RWPE1 (cell line): ENCODE measurements at regions of chr9 and their contacts with region 1.

Region 1: GRCh38 chr9:93302551-93303257 is 118.8 kb downstream of the WNK2 start:
- DNase-seq: peak; percentile 70
- H3K27ac ChIP-seq: no peak overlapping the region
- CTCF ChIP-seq: peak; percentile 76

Region 2: GRCh38 chr9:93154315-93154903 is 148.3 kb before region 1 on chr9:
- CTCF ChIA-PET with region 1: interaction called, 28 read pairs
- POLR2A ChIA-PET with region 1: no interaction called
- DNase-seq: peak; percentile 57
- H3K27ac ChIP-seq: no peak overlapping the region
- CTCF ChIP-seq: peak; percentile 71

Region 3: DNA sequence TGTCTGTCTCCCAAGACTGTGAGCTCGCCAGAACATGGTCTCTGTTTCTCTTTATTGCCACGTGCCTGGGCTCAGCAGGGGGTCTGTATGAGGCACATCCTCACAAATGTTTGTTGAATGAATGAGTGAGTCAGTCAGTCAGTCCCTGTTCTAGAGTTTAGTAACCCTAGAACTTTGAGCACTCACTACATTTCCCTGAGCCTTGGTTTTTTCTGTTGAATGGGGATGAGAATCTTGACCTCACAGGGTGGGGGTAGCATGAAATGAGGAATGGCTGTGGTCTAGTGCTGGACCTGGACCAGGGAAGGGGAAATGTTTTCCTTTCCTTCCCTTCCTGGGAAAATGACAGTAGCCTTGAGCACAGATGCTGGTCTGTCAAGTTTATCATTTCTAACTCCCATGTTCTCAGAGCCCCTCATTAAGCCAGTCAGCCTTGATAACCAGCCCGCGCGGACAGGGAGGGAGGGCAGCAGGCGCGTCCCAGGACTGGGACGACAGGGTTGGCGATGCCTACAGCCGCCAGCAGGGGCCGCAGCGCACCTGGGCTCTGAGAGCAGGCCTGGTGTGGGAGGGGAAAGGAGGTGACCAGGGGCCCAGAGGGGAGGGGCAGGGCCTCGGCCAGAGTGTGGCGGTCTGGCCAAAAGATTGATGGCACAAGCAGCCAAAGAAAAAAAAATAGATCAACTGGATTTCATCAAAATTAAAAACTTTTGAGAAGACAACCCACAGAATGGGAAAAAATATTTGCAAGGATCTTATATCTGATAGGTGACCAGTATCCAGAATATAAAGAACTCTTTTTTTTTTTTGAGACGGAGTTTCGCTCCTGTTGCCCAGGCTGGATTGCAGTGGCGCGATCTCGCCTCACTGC is 142.9 kb before region 1 on chr9:
- CTCF ChIA-PET with region 1: interaction called, 28 read pairs
- POLR2A ChIA-PET with region 1: no interaction called
- DNase-seq: peak; percentile 95
- H3K27ac ChIP-seq: no peak overlapping the region
- CTCF ChIP-seq: peak; percentile 100

Region 4: DNA sequence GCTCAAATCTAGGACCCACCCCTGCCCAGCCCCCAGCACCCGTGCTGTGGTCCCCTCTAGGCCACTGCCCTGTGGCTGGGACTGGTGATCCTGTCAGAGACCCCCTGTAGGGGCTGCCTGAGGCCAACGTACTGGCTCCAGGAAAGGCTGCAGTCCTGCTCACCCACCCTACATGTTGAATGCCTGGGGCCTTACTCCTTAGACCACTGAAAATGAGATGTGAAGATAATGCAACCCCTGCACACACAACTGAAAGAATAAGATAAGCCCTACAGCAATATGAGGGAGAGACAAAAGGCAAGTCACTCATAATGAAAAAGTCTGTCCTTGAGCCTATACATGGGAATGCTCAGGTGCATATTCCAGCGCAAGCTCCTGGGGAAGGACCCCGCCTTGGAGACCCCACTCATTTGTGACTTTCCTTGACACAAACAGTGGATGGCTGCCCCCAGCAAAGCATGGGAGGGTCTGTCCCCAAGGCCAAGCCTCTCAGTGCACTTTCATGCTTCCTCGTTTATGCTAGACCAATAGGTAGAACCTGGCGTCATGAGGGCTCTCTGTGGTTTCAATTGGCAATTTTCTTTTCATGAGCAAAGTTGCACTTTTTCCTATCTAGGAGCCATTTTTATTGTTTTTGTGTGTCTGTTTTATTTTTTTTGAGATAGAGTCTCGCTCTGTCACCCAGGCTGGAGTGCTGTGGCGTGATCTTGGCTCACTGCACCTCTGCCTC is 131.3 kb before region 1 on chr9:
- CTCF ChIA-PET with region 1: no interaction called
- POLR2A ChIA-PET with region 1: no interaction called
- DNase-seq: no peak
- H3K27ac ChIP-seq: no peak overlapping the region
- CTCF ChIP-seq: no peak

Region 5: GRCh38 chr9:93183609-93184431 is 118.9 kb before region 1 on chr9 and contains the start of gene WNK2:
- CTCF ChIA-PET with region 1: interaction called, 12 read pairs
- POLR2A ChIA-PET with region 1: no interaction called
- DNase-seq: peak; percentile 89
- H3K27ac ChIP-seq: no peak within 1 kb of the TSS
- CTCF ChIP-seq: no peak

Region 6: DNA sequence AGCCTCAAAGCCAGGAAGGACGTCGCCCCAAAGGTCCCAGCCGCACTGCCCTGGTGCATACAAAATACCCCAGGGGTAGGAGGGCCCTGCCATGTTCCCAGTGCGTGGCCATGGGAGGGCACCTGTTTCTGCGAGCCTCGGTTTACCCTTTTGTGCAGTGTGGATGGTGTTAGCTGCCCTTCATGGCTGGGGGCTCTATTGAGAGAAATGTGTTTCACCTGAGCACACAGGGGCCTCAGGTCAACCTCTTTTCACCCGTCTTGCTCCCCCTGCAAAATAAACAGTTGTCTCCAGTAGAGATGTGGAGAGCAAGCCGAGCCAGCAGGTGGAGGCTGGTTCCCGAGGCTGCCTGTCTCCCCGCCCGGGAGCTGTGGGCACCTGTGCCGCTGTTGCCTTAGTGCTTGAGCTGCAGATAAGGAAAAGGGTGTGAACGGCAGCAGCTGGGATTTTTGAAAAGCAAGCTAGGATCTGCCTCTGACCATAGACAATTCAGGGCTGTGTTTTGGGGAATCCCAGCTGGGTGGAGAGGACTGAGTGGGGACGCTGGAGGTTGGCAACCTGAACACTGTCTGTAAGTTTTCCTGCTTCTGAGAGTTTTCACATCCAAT is 109.5 kb before region 1 on chr9:
- CTCF ChIA-PET with region 1: interaction called, 29 read pairs
- POLR2A ChIA-PET with region 1: no interaction called
- DNase-seq: no peak
- H3K27ac ChIP-seq: no peak overlapping the region
- CTCF ChIP-seq: no peak; the same call in 1 of the 2 replicates